Heart right ventricle (tissue), 16 donors: ENCODE measurements at regions of chr9 and their contacts with region 1.

Region 1: DNA sequence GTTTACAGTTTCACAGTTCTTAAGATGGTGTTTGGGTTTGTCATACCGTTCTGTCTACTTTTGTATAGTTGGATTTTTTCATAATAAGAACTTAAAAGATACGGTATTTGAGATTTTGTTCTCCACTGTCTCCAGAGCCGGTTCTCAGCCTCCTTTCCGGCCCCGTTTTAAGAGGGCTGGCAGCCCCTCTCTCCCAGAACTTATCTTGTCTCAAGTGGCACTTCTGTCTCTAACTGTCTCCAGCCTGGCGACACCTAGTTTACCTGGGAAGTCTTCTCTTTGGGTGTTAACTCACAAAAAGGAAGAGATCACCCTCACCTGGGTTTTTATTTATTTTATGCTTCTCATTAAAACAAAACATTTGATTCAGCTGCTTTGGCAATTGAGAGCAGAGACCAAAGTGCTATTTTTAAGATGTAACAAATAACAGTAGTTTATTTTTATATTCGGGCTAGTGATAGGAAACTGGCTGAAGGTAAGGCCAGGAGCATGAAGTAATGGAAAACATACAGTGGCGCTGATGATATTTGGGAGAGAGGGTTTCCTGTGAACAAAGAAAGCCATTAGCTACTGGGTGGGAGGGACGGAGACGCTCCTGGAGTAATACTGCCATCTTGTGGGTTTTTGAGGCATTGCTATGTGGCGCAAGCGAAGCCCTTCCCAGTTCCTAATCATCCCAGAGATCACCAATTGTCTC is 48.3 kb downstream of the ACER2 start:
- DNase-seq: peak in 1 of 2 donors; percentile 80
- ATAC-seq: peak; percentile 88 to 99 (median 96)
- H3K4me3 ChIP-seq: peak overlapping the region in 8 of 10 donors; percentile 14 to 38 (median 30)
- H3K27ac ChIP-seq: peak overlapping the region; percentile 12 to 85 (median 58)
- H3K4me1 ChIP-seq: peaks cover 3 to 17% (median 11%) of the 10 kb centered on the region in 9 donors
- H3K27me3 ChIP-seq: no peaks in the 10 kb centered on the region
- CTCF ChIP-seq: peak; percentile 87 to 99 (median 98)

Region 2: GRCh38 chr9:18238254-18238653 is 1218.9 kb before region 1 on chr9:
- intact Hi-C with region 1: loop called in 1 of 10 experiments (anchors 10 kb)
- DNase-seq: no peak
- ATAC-seq: peak in 1 of 8 donors; percentile 41
- H3K4me3 ChIP-seq: no peak overlapping the region
- H3K27ac ChIP-seq: no peak overlapping the region
- H3K4me1 ChIP-seq: peaks cover 0 to 17% (median 6%) of the 10 kb centered on the region in 9 donors
- H3K27me3 ChIP-seq: peaks cover 0 to 2% (median 0%) of the 10 kb centered on the region in 7 donors
- CTCF ChIP-seq: no peak

Region 3: GRCh38 chr9:19085295-19085694 is 371.8 kb before region 1 on chr9:
- intact Hi-C with region 1: loop called in 1 of 10 experiments (anchors 5 kb)
- DNase-seq: no peak
- ATAC-seq: no peak
- H3K4me3 ChIP-seq: no peak overlapping the region
- H3K27ac ChIP-seq: no peak overlapping the region
- H3K4me1 ChIP-seq: no peaks in the 10 kb centered on the region
- H3K27me3 ChIP-seq: no peaks in the 10 kb centered on the region
- CTCF ChIP-seq: peak in 7 of 9 donors; percentile 7 to 47 (median 38)

Region 4: DNA sequence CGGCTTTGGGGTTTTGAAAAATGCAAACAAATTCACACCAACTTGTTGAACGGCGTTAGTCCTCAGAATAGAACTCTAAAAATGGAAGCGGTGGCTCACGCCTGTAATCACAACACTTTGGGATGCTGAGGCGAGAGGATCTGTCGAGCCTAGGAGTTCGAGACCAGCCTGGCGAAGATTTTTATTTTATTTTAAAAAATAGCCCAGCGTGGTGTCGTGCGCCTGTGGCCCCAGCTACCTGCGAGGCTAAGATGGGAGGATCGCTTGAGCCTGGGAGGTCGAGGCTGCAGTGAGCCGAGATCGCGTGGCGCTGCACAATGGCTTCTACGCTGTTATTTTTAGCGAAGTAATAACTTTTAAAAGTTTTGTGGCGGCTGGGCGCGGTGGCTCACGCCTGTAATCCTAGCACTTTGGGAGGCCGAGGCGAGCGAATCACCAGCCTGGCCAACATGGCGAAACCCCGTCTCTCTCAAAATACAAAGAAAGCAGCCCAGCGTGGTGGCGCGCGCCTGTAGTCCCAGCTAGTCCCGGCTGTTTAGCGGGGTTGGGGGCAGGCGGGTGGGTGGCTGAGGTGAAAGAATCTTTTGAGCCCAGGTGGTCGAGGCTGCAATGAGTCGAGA is 329.2 kb before region 1 on chr9:
- intact Hi-C with region 1: loop called in 2 of 10 experiments (anchors 10 kb)
- DNase-seq: peak; percentile 16 to 37
- ATAC-seq: peak; percentile 15 to 57 (median 40)
- H3K4me3 ChIP-seq: peak overlapping the region; percentile 66 to 97 (median 88)
- H3K27ac ChIP-seq: peak overlapping the region; percentile 95 to 100 (median 97)
- H3K4me1 ChIP-seq: peaks cover 2 to 64% (median 36%) of the 10 kb centered on the region in 9 donors
- H3K27me3 ChIP-seq: no peaks in the 10 kb centered on the region
- CTCF ChIP-seq: no peak

Region 5: DNA sequence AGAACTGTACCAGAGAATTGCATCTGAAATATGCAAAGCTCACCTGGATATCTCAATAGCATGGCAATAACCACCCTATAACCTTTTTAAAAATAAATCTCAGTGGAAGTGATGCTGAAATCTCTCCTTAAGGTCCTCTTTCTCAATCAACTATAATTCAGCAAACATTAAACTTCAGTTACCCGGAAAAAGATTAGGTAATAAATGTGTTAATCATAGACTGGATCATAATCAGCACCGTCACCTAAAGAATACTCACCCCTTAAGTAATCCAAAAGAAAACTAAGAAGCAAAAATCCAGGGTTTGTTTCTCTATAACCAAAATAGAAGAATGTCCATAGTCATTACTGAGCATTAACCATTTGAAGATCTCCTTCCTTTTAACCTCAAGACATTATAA is 270.9 kb before region 1 on chr9:
- intact Hi-C with region 1: no loop called
- DNase-seq: no peak
- ATAC-seq: no peak
- H3K4me3 ChIP-seq: no peak overlapping the region
- H3K27ac ChIP-seq: no peak overlapping the region
- H3K4me1 ChIP-seq: peaks cover 5 to 45% (median 37%) of the 10 kb centered on the region in 9 donors
- H3K27me3 ChIP-seq: no peaks in the 10 kb centered on the region
- CTCF ChIP-seq: no peak

Region 6: GRCh38 chr9:19230356-19231125 is 226.6 kb before region 1 on chr9 and contains the start of gene DENND4C:
- intact Hi-C with region 1: loop called in 2 of 10 experiments (anchors 10 kb)
- DNase-seq: peak; percentile 85 to 90
- ATAC-seq: peak; percentile 88 to 95 (median 94)
- H3K4me3 ChIP-seq: peak within 1 kb of the TSS; percentile 83 to 100 (median 98)
- H3K27ac ChIP-seq: peak within 1 kb of the TSS; percentile 96 to 99 (median 98)
- H3K4me1 ChIP-seq: peaks cover 0 to 42% (median 31%) of the 10 kb centered on the region in 9 donors
- H3K27me3 ChIP-seq: no peaks in the 10 kb centered on the region
- CTCF ChIP-seq: peak in 3 of 9 donors; percentile 6 to 44 (median 10)
- total RNA-seq, gene DENND4C: 21.7 to 28.3 (median 23.8) TPM

Region 7: DNA sequence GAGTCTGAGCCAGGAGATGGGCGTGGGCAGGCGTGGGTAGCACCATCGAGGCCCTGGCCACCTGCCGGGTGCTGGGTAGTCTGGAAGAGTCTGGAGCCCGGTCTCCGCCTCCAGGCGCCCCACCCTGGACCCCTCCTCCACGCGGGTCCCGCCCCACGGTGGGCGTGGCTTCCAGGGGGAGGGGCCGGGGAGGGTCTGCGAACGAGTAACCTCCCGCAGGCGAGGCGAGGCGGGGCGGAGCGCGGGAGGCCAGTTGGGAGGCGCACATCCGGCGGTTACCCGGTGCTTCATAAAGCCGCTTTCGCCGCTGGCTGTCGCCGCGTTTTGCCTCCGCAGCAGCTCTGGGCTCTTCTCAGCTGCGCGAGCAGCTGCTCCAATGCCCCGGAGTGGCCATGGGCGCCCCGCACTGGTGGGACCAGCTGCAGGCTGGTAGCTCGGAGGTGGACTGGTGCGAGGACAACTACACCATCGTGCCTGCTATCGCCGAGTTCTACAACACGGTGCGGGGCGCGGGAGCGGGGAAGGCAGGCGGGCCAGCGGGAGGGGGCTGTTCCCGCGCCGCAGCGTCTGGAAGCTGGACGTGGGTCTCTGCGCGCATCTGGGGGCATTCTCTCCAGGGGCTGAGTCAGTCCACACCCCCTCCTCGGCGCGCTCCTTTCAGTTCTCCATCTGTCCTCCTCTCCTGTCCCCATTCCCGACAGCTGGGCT is 48.3 kb before region 1 on chr9 and contains the start of gene ACER2:
- intact Hi-C with region 1: loop called in 2 of 10 experiments (anchors 2 to 5 kb)
- DNase-seq: peak; percentile 96 to 98
- ATAC-seq: peak; percentile 97 to 100 (median 98)
- H3K4me3 ChIP-seq: peak within 1 kb of the TSS; percentile 70 to 98 (median 92)
- H3K27ac ChIP-seq: peak within 1 kb of the TSS; percentile 82 to 96 (median 90)
- H3K4me1 ChIP-seq: peaks cover 0 to 46% (median 22%) of the 10 kb centered on the region in 9 donors
- H3K27me3 ChIP-seq: no peaks in the 10 kb centered on the region
- CTCF ChIP-seq: peak in 4 of 9 donors; percentile 7 to 23 (median 20)
- total RNA-seq, gene ACER2: 1.7 to 8.7 (median 4.0) TPM